GM18951 (cell line): ENCODE measurements at regions of chr14 and their contacts with region 1.

Region 1: GRCh38 chr14:94307410-94307992 is 14.4 kb upstream of the SERPINA10 start:
- POLR2A ChIP-seq: no peak

Region 2: DNA sequence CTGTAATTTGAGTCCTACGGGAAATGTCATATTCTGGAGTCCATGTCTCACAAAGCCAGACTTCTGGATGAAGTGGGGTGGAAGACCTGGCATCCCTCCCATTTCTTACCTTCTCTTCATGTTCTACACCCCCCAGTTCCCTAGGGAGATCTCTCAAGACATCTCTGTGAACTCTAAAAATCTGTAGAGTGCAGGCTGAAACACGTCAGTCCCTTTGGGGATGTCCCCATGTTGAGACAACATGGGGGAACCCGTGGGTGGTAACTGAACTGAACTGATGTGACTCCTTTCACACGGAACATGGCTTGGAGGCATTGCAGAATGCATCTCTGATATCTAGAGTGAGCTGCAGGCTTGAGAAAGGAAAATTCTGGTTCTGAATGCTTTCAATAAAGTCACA is 186.6 kb after region 1 on chr14:
- in situ Hi-C with region 1: loop called (anchors 10 kb)
- POLR2A ChIP-seq: no peak